ENCODE measurements at regions of chr2 and their contacts with region 1.

Region 1: GRCh38 chr2:155377266-155377680 is 678.8 kb downstream of the KCNJ3 start:
- DNase-seq: no peak
- ATAC-seq: no peak
- H3K4me3 ChIP-seq: no peak overlapping the region
- H3K27ac ChIP-seq: no peak overlapping the region
- H3K4me1 ChIP-seq: no peaks in the 10 kb centered on the region
- H3K27me3 ChIP-seq: no peaks in the 10 kb centered on the region
- CTCF ChIP-seq: peak; percentile 49

Region 2: GRCh38 chr2:156332534-156333273 is 955.4 kb after region 1 on chr2 and contains the start of gene NR4A2:
- CTCF ChIA-PET with region 1: interaction called, 5 read pairs
- POLR2A ChIA-PET with region 1: no interaction called
- in situ Hi-C with region 1: no loop called
- intact Hi-C with region 1: loop called (anchors 10 kb)
- DNase-seq: no peak
- ATAC-seq: peak; percentile 85
- H3K4me3 ChIP-seq: peak within 1 kb of the TSS; percentile 78 to 83
- H3K27ac ChIP-seq: peak within 1 kb of the TSS; percentile 65; the same call in 1 of the 2 replicates
- H3K4me1 ChIP-seq: peaks cover 13% of the 10 kb centered on the region
- H3K27me3 ChIP-seq: no peaks in the 10 kb centered on the region
- CTCF ChIP-seq: no peak
- total RNA-seq, gene NR4A2: 0.85 TPM

Region 3: DNA sequence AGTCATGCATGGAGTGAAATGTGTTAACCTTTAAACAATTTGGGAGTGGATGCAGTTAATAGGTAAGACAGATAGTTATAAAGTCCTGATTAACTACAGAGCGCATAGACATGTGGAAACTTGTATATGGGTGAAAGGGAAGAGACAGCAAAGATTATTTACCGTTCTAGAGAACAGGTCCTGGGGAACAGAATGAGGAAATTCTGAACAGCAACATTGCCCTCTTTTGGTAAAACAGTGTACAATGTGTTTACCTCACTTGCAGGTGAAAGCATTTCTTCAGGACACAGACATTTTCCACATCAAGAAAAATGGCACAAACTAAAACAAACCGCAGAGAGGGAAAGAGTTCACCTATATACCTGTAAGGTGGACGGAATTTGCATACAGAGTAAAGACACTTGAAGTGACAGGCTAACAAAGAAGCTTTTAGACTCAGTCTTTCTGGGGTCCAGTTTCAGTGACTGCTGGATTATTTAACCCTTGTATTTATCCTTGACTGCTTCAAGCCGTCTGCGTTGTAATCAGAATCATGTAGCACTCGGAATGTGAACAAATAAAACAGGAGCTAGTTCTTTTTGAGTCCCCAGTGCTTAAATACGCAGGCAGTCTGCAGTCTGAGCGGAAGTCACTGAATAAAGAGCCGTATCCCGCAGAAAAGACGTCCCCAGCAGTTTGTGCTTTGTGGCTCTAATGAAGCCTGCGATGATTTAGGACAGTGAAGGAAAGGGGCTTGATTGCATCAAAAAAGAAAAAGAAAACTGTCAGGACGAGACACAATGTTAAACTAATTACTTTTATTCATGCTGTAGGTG is 1515.4 kb after region 1 on chr2:
- CTCF ChIA-PET with region 1: no interaction called
- POLR2A ChIA-PET with region 1: no interaction called
- in situ Hi-C with region 1: no loop called
- intact Hi-C with region 1: loop called (anchors 10 kb)
- DNase-seq: peak; percentile 30
- ATAC-seq: peak; percentile 83; the same call in 1 of the 2 replicates
- H3K4me3 ChIP-seq: peak overlapping the region; percentile 19 to 31
- H3K27ac ChIP-seq: no peak overlapping the region
- H3K4me1 ChIP-seq: 0 out of 2 replicates have a peak, but pooled peaks cover 3% of the 10 kb centered on the region
- H3K27me3 ChIP-seq: no peaks in the 10 kb centered on the region; the same call in 1 of the 2 replicates
- CTCF ChIP-seq: peak; percentile 58

Region 4: DNA sequence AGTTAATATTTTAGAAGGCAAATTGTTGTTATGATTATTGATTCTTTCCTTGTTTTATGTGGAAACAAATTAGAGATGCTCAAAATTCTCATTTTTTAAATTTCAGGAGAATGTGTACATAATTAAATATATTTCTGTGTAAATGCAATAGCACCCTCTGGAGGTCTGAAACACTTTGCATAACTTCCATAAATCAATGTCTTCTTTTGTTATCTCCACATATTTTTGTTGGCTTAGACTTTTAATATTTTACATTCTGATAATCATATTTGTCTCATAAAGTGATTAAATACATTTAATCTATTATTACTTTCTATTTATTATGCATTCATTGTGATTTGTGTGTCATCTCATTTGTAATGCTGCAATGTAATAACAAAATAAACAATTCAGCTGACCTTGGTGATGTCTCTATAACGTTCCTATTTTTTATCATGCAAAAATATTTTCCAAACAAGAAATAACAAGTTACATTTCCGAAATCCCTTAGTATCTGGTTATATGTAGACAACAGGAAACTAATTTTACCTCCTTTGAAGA is 1678.5 kb after region 1 on chr2:
- CTCF ChIA-PET with region 1: no interaction called
- POLR2A ChIA-PET with region 1: no interaction called
- in situ Hi-C with region 1: no loop called
- intact Hi-C with region 1: loop called (anchors 10 kb)
- DNase-seq: no peak
- ATAC-seq: no peak
- H3K4me3 ChIP-seq: no peak overlapping the region
- H3K27ac ChIP-seq: no peak overlapping the region
- H3K4me1 ChIP-seq: no peaks in the 10 kb centered on the region
- H3K27me3 ChIP-seq: no peaks in the 10 kb centered on the region
- CTCF ChIP-seq: peak; percentile 12; the same call in 1 of the 2 replicates